ENCODE measurements at regions of chr19 and their contacts with region 1.

Region 1: GRCh38 chr19:48006762-48007161 is 12.3 kb downstream of the ELSPBP1 start:
- DNase-seq: peak; percentile 1 to 61
- H3K4me3 ChIP-seq: no peak overlapping the region
- H3K27ac ChIP-seq: no peak overlapping the region
- H3K4me1 ChIP-seq: no peaks in the 10 kb centered on the region; a peak in 1 of 7 replicates
- H3K27me3 ChIP-seq: no peaks in the 10 kb centered on the region
- CTCF ChIP-seq: peak; percentile 31 to 75 (median 35)
- EP300 ChIP-seq: no peak
- POLR2A ChIP-seq: no peak
- RAD21 ChIP-seq: peak in 1 of 2 experiments; percentile 19; a peak in 2 of 4 replicates

Region 2: GRCh38 chr19:47994209-47994802 is 12.5 kb before region 1 on chr19 and contains the start of gene ELSPBP1:
- CTCF ChIA-PET with region 1: interaction called, 10 read pairs
- POLR2A ChIA-PET with region 1: no interaction called
- DNase-seq: no peak
- H3K4me3 ChIP-seq: no peak within 1 kb of the TSS
- H3K27ac ChIP-seq: no peak within 1 kb of the TSS
- H3K4me1 ChIP-seq: no peaks in the 10 kb centered on the region
- H3K27me3 ChIP-seq: no peaks in the 10 kb centered on the region
- CTCF ChIP-seq: no peak
- EP300 ChIP-seq: no peak
- POLR2A ChIP-seq: no peak
- RAD21 ChIP-seq: no peak
- total RNA-seq, gene ELSPBP1: not detected in 2 replicates

Region 3: DNA sequence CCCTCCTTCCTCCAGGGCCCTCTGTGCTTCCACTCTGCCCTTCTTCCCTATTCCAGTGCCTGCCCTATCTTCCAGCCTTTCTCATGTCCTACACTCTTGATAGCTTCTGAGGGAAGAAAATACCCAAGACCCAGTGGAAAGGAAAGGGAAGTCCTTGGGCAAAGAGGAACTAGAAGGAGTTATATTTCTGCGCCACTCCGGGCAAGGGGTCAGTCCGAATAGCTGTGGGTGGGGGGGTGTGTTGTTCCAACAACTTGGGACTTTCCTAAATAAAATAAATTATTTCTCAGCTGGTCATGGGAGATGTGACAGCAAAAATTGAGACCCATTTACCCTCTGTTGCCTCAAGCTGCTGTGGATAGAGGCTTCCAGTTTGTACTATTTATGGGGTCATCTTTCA is 13.9 kb after region 1 on chr19:
- CTCF ChIA-PET with region 1: interaction called, 10 read pairs
- POLR2A ChIA-PET with region 1: no interaction called
- DNase-seq: no peak
- H3K4me3 ChIP-seq: no peak overlapping the region
- H3K27ac ChIP-seq: no peak overlapping the region
- H3K4me1 ChIP-seq: no peaks in the 10 kb centered on the region
- H3K27me3 ChIP-seq: no peaks in the 10 kb centered on the region
- CTCF ChIP-seq: no peak
- EP300 ChIP-seq: no peak
- POLR2A ChIP-seq: no peak
- RAD21 ChIP-seq: no peak

Region 4: DNA sequence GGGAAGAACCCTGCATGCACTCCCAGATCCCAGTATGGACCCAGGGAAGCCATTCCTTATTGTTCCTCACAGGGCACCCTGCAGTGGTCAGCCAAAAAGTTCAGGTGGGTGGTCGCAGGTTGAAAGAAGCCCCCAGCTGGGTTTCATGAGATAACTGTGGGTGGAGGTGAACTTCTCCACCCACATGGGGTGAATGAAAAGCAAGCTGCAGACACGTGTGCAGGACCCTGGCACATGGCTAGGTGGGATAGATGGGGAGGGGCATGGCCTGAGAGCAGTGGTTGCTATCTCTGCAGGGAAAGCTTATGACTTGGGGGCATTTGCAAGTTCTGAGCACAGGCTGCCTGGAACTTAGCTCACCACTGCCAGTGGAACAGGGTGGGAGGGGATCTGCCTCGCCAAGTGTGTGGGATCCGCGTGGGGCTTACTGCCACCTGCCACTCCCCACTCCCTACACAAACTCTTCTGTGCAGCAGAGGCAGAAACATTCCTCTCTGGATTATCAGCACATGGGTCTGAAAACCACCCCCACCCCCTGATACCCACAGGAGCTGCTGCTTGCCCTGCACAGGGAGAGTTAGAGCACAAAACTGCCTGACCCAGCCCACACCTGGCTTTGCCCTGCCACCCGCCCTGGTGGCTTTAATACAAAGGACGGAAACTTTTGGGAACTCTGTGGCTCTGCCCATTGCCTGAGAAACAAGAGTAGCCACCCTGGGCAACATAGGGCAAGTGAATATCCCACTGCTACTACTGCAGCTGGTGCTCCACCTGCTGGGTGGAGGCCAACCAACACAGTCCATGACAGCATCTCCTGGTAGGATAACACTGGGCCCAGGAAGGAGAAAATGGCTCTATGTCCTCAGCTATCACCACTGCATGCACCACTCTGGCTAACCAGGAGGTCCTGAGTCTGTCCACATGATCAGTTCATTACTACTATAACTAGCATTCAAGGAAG is 79.4 kb after region 1 on chr19:
- CTCF ChIA-PET with region 1: interaction called, 11 read pairs
- POLR2A ChIA-PET with region 1: no interaction called
- DNase-seq: peak in 1 of 2 experiments; percentile 67
- H3K4me3 ChIP-seq: no peak overlapping the region
- H3K27ac ChIP-seq: no peak overlapping the region
- H3K4me1 ChIP-seq: no peaks in the 10 kb centered on the region; a peak in 1 of 7 replicates
- H3K27me3 ChIP-seq: no peaks in the 10 kb centered on the region; a peak in 2 of 7 replicates
- CTCF ChIP-seq: peak; percentile 68 to 78 (median 73)
- EP300 ChIP-seq: no peak
- POLR2A ChIP-seq: 0 out of 3 replicates have a peak, but pooled peaks of 1 of the 2 experiments have one; percentile 23
- RAD21 ChIP-seq: peak; percentile 55 to 71

Measured in H1 (cell line).